ENCODE measurements at regions of chr1 and their contacts with region 1.

Region 1: GRCh38 chr1:229625915-229626831 is at the starts of genes TAF5L and URB2:
- DNase-seq: peak; percentile 92 to 95
- ATAC-seq: peak; percentile 97
- H3K4me3 ChIP-seq: peak within 1 kb of the TSS; percentile 80 to 100
- H3K27ac ChIP-seq: peak within 1 kb of the TSS; percentile 56 to 80
- H3K4me1 ChIP-seq: peaks cover 0 to 5% of the 10 kb centered on the region in 2 donors
- H3K27me3 ChIP-seq: no peaks in the 10 kb centered on the region
- total RNA-seq, gene TAF5L: 29.8 to 37.8 TPM
- total RNA-seq, gene URB2: 6.8 to 8.9 TPM

Region 2: DNA sequence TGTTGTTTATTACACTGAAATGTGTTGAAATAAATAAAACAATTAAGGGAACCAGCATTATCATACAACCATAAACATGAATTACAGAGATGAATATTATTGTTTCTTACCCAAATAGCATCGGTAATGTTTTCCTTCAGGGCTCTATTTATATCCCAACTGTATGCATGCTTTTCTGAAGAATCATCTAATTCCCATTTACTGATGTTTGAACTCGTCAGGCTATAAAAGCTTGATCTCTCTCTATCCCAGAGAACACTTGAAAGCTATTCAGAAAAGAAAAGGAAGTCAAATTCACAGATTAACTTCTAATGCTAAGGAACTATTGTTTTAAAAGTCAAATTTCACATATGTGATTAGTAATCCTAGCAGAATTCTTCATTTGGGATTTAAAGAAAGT is 130.4 kb before region 1 on chr1:
- intact Hi-C with region 1: no loop called
- DNase-seq: no peak
- ATAC-seq: no peak
- H3K4me3 ChIP-seq: no peak overlapping the region
- H3K27ac ChIP-seq: no peak overlapping the region
- H3K4me1 ChIP-seq: no peaks in the 10 kb centered on the region
- H3K27me3 ChIP-seq: no peaks in the 10 kb centered on the region

Region 3: GRCh38 chr1:229596925-229597699 is 29.1 kb before region 1 on chr1:
- intact Hi-C with region 1: loop called (anchors 2 kb)
- DNase-seq: peak; percentile 85 to 87
- ATAC-seq: peak; percentile 91
- H3K4me3 ChIP-seq: no peak overlapping the region
- H3K27ac ChIP-seq: peak overlapping the region; percentile 73 to 98
- H3K4me1 ChIP-seq: peaks cover 8 to 16% of the 10 kb centered on the region in 2 donors
- H3K27me3 ChIP-seq: no peaks in the 10 kb centered on the region